Right ventricle myocardium superior (tissue), 1 donor: ENCODE measurements at regions of chr18 and their contacts with region 1.

Region 1: DNA sequence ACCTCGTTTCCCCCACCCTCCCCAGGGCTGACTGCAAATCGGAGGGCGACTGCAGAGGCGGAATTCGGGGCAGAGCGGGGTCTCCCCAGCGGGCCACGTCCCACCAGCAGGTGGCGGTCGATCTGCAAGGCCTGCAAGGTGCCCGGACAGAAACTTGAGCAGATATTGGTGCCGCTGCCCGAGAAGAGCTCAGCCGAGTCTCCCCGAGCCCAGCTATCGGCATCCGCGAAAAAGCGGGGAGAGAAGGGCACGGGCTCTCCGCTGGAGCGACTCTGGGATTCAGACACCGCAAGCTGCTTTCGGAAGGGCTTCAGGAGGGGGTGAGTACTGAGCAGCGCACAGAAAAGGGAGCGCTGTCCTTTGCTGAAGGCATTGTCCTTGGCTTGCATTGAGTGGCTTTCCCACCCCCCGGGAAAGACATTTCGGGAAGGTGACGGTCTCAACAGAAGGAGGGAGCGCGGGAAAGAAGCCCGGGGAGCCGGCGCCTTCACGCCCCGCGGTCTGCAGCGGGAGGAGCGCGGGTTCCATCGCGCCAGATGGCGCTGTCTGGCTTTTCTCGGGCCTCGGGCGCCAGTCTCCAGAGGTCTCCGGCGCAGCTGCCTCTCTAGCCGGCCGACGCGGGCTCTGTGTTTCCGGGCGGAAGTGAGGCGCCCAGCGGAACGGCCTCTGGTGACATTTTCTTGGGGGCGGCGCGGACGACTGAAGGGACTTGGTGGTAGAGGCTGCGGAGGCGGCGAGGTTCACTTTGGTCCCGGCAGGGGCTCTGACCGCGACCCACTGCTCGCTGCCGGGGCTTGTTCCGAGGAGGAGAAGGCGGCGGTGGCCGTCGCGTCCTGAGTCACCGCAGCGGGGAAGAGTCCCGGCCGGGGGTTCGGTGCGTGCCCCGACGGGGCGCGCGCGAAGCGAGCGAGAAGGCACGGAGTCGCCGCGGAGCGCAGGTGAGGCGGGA is 69.5 kb downstream of the HAUS1 start:
- DNase-seq: peak; percentile 97
- ATAC-seq: peak; percentile 98

Region 2: DNA sequence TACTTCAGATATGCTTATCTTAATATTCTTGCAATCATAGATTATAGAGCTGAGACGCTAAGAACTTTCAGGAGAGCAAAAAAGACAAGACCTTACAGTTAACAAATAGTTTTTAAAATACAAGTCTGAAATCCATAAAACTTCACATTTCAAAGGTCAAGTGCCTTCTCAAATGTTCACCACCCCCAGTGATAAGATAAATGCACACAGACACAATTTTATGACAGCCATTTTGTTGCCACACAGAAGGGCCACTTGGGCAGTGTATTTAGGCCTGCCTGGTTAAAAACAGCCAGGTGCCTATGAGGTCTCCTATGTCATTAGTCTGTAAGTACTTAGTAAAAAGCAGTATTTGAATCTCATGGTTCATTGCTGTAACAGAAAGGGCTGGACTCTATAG is 93.5 kb before region 1 on chr18:
- intact Hi-C with region 1: no loop called
- DNase-seq: no peak
- ATAC-seq: no peak

Region 3: DNA sequence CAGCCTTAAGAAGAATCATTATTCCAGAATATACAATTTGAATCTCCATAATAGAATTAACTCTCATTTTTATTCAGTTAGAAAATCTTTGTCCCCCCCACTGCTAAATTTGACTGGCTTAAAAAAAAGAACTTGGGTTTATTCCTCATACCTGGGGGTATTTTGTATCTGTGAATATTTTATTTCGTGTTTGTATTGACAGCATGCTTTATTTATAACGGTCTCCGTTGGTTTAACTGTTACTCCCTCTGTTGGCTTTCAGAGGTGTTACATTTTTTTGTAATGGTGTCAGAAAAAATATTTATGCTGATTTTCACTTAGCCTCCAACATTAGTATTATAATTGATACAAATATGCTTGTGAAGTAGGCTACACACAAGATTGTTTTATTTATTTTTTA is 39.6 kb after region 1 on chr18:
- intact Hi-C with region 1: loop called (anchors 5 kb)
- DNase-seq: no peak
- ATAC-seq: peak; percentile 60

Region 4: DNA sequence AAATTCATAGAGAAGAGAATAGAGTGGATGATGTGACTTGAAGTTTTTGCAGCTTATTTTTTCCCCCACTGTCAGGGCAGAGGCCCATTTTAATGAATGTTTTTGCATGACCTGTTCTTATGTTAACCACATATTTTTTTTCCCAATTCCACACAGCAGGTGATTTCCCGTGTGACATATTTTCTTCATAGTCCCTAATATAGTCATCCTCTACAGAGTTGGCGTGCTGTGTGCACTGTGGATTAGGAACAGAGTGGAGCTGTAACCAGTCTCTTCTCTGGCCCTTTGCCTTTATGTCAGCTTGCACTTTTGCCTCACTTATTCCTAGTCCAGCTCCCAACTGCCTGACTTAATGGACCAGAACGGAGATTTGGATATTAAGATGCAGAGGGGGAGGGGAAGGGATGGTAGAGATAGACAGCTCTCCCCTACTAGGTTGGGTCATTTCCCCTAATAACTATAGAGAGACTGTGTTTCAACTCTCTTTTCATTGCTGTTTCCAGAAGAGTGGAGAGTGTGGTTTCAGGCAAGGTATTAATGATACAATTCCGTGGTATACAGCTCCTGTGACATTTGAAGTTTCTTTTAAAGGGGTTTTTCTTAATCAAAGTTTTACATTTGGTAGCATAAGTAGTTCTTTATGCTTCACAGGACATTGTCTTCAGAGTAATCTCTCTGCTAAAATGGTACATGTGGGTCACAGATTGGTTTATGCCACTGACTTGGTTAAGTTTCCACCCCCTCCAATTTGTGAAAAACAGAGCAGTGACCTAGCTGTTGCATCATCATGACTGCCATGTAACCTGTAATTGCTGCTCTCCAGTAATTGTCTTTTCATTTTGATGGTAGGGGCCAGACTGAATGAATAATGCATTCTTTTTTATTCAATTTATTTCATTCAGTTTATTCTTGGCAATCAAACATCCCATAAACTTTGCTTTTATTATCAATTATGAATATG is 91.8 kb after region 1 on chr18:
- intact Hi-C with region 1: loop called (anchors 5 kb)
- DNase-seq: no peak
- ATAC-seq: no peak

Region 5: DNA sequence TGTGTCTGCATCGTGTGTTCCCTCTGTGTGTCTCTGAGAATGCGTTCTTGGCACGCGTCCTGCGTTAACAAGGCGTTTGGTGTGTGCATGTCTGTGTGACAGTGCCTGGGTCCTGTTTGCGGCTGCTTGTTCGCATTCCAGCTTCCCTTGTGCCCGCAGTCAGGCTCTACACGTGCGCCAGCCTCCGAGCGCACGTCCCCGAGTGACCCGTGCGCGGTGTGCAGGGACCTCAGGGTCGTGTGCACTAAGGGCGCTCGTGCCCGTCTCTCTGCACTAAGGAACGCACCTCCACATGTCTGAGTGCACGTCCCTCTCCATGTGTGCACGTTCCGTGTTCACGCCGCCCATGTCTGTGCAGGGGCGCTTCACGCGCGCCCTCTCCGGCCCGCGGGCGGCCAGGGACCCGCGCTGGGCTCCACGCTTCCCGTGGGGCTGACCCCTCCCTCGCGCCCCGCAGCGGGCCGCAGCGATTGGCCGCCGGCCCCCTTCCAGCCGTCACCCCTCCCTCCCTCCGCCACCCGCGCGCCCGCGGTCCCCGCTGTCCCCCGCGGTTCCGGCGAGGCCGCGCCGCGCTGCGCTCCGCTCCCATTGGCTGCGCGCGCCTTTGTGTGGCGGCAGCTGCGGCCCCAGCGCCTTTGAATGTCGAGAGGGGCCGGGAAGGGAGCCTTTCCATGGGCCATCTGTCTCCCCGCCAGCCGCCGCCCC is 159.9 kb after region 1 on chr18:
- intact Hi-C with region 1: loop called (anchors 10 kb)
- DNase-seq: peak; percentile 66
- ATAC-seq: peak; percentile 87

Region 6: DNA sequence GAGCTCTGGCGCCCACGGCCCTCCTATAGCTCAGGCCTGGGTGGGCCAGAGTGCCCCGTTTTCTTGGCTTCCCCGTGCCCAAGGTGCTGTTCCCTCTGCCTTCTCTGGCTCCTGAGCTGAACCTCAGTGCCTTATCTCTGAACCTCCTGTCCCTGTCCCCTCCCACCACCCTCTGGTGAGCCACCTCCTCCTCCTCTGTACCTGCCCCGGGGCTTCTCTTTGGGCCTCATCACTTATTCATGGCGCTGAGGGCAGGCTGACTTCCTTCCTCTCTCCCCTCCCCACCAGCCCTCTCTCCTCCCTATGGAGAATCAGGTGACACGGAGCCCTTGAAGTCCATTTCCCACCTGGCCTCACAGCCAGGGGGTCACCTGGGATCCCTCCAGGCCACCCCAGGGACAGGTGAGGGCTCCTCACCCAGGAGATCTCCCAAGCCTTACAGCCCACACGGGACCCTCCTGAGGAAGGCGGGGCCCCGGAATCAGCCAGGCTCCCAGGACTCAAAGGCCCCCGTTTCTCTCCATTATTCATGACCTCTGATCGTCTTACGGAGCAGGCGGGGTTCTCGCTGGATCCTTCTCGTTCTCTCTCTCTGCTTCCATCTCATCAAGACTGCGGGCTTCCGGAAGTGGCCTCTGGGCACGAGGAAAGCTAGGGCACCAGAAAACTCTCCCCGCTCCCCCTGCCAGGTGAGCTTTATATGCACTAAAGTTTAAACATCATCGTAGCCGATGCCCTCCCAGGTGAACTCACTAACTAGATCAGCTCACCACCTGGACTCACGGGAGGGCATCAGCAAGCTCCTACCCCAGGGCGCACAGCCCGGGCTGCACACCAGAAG is 483.7 kb after region 1 on chr18 and contains the start of gene LOXHD1:
- intact Hi-C with region 1: loop called (anchors 5 kb)
- DNase-seq: no peak
- ATAC-seq: no peak
- total RNA-seq, gene LOXHD1: 0.62 TPM

Region 7: DNA sequence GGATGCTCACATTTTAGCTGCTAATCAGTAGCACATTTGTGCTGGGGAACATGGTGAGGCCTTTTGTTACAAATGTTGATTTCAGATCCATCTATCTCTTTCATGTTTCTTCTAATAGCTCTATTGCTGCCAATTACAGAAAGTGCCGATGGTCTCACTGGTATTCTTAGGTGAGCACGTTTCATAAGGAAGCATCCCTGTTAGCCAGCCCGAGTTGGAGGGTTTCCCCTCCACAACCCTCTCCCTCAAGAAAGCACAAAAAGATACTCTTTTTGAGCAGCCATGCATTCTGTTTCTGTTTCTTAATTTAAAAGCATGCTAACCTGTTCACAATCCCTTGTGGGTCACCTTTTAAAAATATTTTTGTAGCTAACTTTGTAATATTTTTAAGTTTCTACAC is 614.0 kb after region 1 on chr18:
- intact Hi-C with region 1: no loop called
- DNase-seq: no peak
- ATAC-seq: no peak